B cell (primary cell): ENCODE measurements at regions of chr16 and their contacts with region 1.

Region 1: GRCh38 chr16:10849736-10850477 is 27.1 kb upstream of the CIITA start:
- DNase-seq: no peak
- ATAC-seq: no peak
- H3K4me3 ChIP-seq: no peak overlapping the region
- H3K4me3 Mint-ChIP-seq: no peak overlapping the region
- H3K27ac ChIP-seq: no peak overlapping the region
- H3K27ac Mint-ChIP-seq: no peak overlapping the region
- H3K4me1 ChIP-seq: peaks cover 26 to 39% of the 10 kb centered on the region in 2 donors
- H3K4me1 Mint-ChIP-seq: peaks cover 59% of the 10 kb centered on the region
- H3K27me3 ChIP-seq: no peaks in the 10 kb centered on the region
- H3K27me3 Mint-ChIP-seq: no peaks in the 10 kb centered on the region
- CTCF ChIP-seq: no peak

Region 2: DNA sequence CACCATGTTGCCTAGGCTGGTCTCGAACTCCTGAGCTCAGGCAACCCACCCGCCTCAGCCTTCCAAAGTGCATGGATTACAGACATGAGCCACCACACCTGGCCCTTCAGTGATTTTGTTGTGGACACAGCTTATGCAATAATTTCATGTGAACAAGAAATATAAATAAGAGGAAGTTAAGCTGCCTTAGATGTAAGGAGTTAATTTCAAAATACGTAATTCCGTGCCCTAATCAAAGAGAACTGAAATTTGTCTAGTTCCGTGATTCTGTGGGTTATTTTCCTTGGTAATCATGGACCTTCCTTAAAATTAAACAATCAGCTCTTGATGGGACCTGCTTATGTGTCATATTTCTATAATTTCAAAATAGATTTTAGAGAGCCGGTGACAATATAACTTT is 43.2 kb before region 1 on chr16:
- CTCF ChIA-PET with region 1: no interaction called
- POLR2A ChIA-PET with region 1: no interaction called
- intact Hi-C with region 1: no loop called
- DNase-seq: peak; percentile 44
- ATAC-seq: peak; percentile 37
- H3K4me3 ChIP-seq: no peak overlapping the region
- H3K4me3 Mint-ChIP-seq: peak overlapping the region; percentile 74
- H3K27ac ChIP-seq: no peak overlapping the region
- H3K27ac Mint-ChIP-seq: peak overlapping the region; percentile 84
- H3K4me1 ChIP-seq: peaks cover 8 to 45% of the 10 kb centered on the region in 2 donors
- H3K4me1 Mint-ChIP-seq: peaks cover 64% of the 10 kb centered on the region
- H3K27me3 ChIP-seq: no peaks in the 10 kb centered on the region
- H3K27me3 Mint-ChIP-seq: no peaks in the 10 kb centered on the region
- CTCF ChIP-seq: no peak

Region 3: GRCh38 chr16:10817963-10818941 is 31.7 kb before region 1 on chr16 and contains the start of gene TVP23A:
- CTCF ChIA-PET with region 1: no interaction called
- POLR2A ChIA-PET with region 1: interaction called, 12 read pairs
- intact Hi-C with region 1: no loop called
- DNase-seq: no peak
- ATAC-seq: no peak
- H3K4me3 ChIP-seq: no peak within 1 kb of the TSS
- H3K4me3 Mint-ChIP-seq: peak within 1 kb of the TSS; percentile 37
- H3K27ac ChIP-seq: no peak within 1 kb of the TSS
- H3K27ac Mint-ChIP-seq: peak within 1 kb of the TSS; percentile 81
- H3K4me1 ChIP-seq: peaks cover 8 to 12% of the 10 kb centered on the region in 2 donors
- H3K4me1 Mint-ChIP-seq: peaks cover 30% of the 10 kb centered on the region
- H3K27me3 ChIP-seq: no peaks in the 10 kb centered on the region
- H3K27me3 Mint-ChIP-seq: peaks cover 4% of the 10 kb centered on the region
- CTCF ChIP-seq: no peak
- total RNA-seq, gene TVP23A: 2.6 and 3.2 TPM in 2 replicates